Lower leg skin (tissue), 4 donors: ENCODE measurements at regions of chr7 and their contacts with region 1.

Region 1: GRCh38 chr7:145986248-145986874 is 130.2 kb upstream of the CNTNAP2 start:
- DNase-seq: no peak
- H3K4me3 ChIP-seq: no peak overlapping the region
- CTCF ChIP-seq: no peak
- POLR2A ChIP-seq: no peak

Region 2: DNA sequence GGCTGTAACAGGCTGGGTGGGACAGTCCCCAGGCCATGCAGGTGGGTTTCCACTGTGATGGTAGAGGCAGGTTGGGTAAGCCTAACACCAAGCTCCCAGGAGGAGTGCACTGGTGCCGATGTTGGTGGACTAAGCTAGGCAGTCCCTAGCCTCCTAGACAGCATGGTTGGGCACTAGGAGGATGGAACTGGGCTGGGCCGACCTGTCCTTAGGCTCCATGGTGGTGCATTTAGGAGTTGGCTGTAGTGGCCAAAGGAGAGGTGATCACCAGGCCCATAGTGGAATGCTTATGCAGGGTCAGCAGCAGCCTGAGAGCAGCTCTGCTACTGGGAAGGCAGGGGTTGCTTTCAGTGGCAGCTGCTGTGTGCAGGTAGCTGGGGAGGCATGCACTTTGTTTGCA is 117.4 kb before region 1 on chr7:
- intact Hi-C with region 1: no loop called
- DNase-seq: no peak
- H3K4me3 ChIP-seq: no peak overlapping the region
- CTCF ChIP-seq: no peak
- POLR2A ChIP-seq: no peak

Region 3: DNA sequence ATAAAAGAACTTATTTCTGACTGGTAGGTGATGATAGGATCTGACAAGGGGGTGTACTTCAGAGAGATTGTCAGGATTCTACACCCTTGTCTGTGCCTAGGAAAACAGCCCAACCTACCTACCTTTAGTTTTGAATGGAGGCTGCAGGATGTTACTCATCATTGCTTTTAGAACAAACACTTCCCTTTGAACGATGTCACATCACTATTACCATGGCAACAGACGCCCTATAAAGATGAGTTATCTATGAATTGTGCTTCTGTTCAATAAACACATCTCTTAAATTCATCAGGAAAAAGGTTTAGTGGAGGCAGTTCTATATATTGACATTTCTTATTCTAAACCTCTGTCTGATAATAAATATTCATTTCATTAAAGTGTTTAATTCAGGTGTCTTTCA is 492.7 kb after region 1 on chr7:
- intact Hi-C with region 1: loop called (anchors 10 kb)
- DNase-seq: no peak
- H3K4me3 ChIP-seq: no peak overlapping the region
- CTCF ChIP-seq: no peak
- POLR2A ChIP-seq: no peak